ENCODE measurements at regions of chr11 and their contacts with region 1.

Region 1: GRCh38 chr11:48172818-48173609 is 43.6 kb upstream of the OR4B1 start:
- DNase-seq: no peak
- H3K4me3 ChIP-seq: no peak overlapping the region
- CTCF ChIP-seq: peak; percentile 88

Region 2: DNA sequence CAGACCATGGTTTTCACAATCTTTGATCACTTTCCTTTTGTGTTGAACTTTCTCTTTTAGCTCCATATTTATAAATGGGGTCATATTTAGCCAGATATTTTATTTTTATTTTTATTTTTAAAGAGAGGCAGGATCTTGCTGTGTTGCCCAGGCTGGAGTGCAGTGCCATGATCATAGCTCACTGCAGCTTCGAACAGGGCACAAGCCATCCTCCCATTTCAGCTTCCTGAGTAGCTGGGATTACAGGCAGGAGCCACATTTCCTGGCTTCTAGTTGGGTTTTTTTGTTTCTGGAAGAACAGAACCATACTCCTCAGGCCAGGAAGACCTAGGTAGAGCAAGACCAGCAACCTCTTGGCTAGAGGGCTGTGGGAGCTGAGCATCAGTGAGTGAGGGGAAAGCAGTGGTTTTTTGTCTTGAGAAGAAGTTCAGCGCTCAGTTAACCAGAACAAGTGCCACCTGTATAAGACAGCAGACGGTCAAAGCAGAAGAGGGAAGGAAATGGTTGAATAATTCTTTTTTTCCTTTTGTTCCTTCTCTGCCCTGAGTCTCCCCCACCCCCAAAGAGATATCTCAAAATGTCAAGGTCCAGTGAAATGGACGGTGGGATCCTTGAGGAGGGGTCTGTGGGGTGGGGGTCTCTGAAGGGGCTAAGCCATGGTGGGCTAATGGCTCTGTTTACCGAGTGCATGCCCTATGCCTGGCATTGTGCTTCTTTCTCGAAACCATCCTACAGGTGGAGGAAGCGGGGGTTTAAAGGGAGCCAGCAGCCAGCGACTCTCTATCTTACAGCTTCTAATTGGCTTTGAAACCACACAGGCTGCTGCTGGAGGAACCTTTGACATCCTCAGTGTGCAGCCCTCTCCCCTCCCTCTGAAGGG is 129.7 kb before region 1 on chr11:
- CTCF ChIA-PET with region 1: no interaction called
- POLR2A ChIA-PET with region 1: no interaction called
- DNase-seq: no peak
- H3K4me3 ChIP-seq: no peak overlapping the region
- CTCF ChIP-seq: no peak

Region 3: GRCh38 chr11:48055292-48056132 is 117.5 kb before region 1 on chr11:
- CTCF ChIA-PET with region 1: no interaction called
- POLR2A ChIA-PET with region 1: no interaction called
- DNase-seq: no peak
- H3K4me3 ChIP-seq: no peak overlapping the region
- CTCF ChIP-seq: no peak

Region 4: DNA sequence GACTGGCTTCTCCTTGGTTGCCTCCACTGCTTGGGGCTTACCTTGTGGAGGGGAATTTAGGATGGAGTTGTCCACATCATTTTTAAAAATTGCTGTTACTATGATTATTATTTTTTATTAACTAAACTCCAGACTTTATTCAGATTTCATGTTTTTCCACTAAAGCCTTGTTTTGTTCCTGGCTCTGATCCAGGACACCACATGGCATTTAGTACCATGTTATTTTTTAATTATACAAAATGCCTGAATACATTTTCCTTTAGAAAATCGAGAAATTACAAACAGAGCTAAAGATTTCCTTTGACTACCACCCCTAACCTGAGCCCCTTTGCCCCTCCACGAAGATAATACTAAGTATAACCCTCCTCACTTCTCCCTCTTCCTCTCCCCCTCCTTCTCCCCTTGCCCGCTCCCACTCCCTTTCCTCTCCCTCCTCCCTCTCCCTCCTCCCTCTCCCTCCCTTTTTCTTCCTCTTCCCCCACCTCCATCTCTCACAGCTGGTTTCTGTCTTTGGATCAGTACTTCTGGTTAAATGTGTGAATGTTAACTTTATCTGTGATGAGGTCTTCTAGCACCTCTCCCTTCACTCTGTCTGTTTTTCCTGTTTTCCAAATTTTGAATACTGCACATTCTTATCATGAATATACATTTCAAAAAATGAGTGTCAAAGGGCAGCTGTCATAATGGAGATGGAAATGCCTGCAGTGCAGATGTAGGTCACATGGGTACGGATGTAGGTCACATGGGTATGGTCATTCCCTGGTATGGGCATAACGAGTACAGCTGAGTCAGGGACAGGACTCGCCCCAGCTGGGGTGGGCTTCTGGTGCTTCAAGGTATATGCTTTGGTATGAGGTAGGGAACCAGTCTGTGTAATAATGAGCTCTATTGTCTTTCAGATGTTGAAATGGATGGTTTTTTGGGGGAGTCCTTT is 10.8 kb before region 1 on chr11:
- CTCF ChIA-PET with region 1: interaction called, 21 read pairs
- POLR2A ChIA-PET with region 1: no interaction called
- DNase-seq: no peak
- H3K4me3 ChIP-seq: no peak overlapping the region
- CTCF ChIP-seq: no peak

Region 5: GRCh38 chr11:48193876-48194275 is 20.9 kb after region 1 on chr11:
- CTCF ChIA-PET with region 1: interaction called, 15 read pairs
- POLR2A ChIA-PET with region 1: no interaction called
- DNase-seq: peak; percentile 61
- H3K4me3 ChIP-seq: no peak overlapping the region
- CTCF ChIP-seq: no peak